CD4-positive, alpha-beta memory T cell (primary cell): ENCODE measurements at regions of chr2 and their contacts with region 1.

Region 1: GRCh38 chr2:55232084-55232862 is at the starts of genes CLHC1 and RPS27A:
- DNase-seq: peak; percentile 92 to 96 (median 94)
- H3K4me3 ChIP-seq: peak within 1 kb of the TSS; percentile 82 to 98
- H3K4me3 Mint-ChIP-seq: peak within 1 kb of the TSS; percentile 92 to 100 (median 100)
- H3K27ac ChIP-seq: peak within 1 kb of the TSS; percentile 97
- H3K27ac Mint-ChIP-seq: peak within 1 kb of the TSS; percentile 94 to 100 (median 98)
- H3K4me1 ChIP-seq: peaks cover 52% of the 10 kb centered on the region
- H3K4me1 Mint-ChIP-seq: peaks cover 46 to 75% (median 62%) of the 10 kb centered on the region in 4 donors
- H3K27me3 ChIP-seq: no peaks in the 10 kb centered on the region
- H3K27me3 Mint-ChIP-seq: no peaks in the 10 kb centered on the region
- total RNA-seq, gene CLHC1: 12.4 to 14.2 TPM
- total RNA-seq, gene RPS27A: 2,280 to 2,392 TPM

Region 2: DNA sequence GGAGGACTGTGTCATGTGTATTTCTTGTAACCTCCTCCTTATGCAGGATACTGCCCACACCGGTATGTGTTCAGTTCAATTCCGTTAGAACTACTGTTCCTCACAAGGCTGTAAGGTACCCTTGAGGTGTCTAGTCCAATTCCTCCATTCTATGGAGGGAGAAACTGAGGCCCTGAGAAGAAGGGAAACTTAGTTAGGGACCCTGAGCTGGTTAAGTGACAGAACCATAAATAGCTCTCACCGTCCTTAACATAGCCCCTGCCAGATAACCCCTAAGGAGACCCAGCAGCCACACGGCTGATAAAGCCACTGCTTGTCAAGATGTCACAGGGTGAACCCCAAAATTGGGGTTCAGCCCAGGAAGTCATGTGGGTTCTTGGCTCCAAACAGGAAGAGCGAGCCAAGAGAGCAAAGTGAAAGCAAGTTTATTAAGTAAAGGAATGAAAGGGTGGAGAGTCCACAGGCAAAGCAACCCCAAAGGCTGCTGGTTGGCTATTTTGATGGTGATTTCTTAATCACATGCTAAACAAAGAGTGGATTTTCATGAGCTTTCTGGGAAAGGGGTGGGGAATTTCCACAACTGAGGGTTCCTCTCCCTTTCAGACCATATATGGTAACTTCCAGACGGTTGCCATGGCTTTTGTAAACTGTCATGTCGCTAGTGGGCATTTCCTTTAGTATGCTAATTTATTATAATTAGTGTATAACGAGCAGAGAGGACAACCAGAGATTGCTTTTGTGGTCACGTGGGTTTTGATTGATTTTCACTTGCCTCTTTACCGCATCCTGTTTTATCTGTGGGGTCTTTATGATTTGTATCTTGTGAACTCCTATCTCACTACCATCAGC is 98.6 kb before region 1 on chr2:
- CTCF ChIA-PET with region 1: interaction called, 3 read pairs
- POLR2A ChIA-PET with region 1: interaction called, 5 read pairs
- intact Hi-C with region 1: loop called (anchors 2 kb)
- DNase-seq: peak; percentile 68 to 89 (median 76)
- H3K4me3 ChIP-seq: peak overlapping the region; percentile 39 to 58
- H3K4me3 Mint-ChIP-seq: peak overlapping the region; percentile 86 to 93 (median 88)
- H3K27ac ChIP-seq: peak overlapping the region; percentile 85
- H3K27ac Mint-ChIP-seq: peak overlapping the region; percentile 94 to 99 (median 98)
- H3K4me1 ChIP-seq: peaks cover 29% of the 10 kb centered on the region
- H3K4me1 Mint-ChIP-seq: peaks cover 18 to 39% (median 26%) of the 10 kb centered on the region in 4 donors
- H3K27me3 ChIP-seq: no peaks in the 10 kb centered on the region
- H3K27me3 Mint-ChIP-seq: no peaks in the 10 kb centered on the region

Region 3: GRCh38 chr2:55268907-55269644 is 36.8 kb after region 1 on chr2 and contains the start of gene MTIF2:
- CTCF ChIA-PET with region 1: no interaction called
- POLR2A ChIA-PET with region 1: interaction called, 20 read pairs
- intact Hi-C with region 1: loop called (anchors 1 kb)
- DNase-seq: peak; percentile 79 to 87 (median 80)
- H3K4me3 ChIP-seq: peak within 1 kb of the TSS; percentile 71 to 74
- H3K4me3 Mint-ChIP-seq: peak within 1 kb of the TSS; percentile 86 to 98 (median 96)
- H3K27ac ChIP-seq: peak within 1 kb of the TSS; percentile 67
- H3K27ac Mint-ChIP-seq: peak within 1 kb of the TSS; percentile 86 to 98 (median 97)
- H3K4me1 ChIP-seq: peaks cover 21% of the 10 kb centered on the region
- H3K4me1 Mint-ChIP-seq: peaks cover 11 to 37% (median 20%) of the 10 kb centered on the region in 4 donors
- H3K27me3 ChIP-seq: no peaks in the 10 kb centered on the region
- H3K27me3 Mint-ChIP-seq: no peaks in the 10 kb centered on the region
- total RNA-seq, gene MTIF2: 33.1 to 38.6 TPM

Region 4: DNA sequence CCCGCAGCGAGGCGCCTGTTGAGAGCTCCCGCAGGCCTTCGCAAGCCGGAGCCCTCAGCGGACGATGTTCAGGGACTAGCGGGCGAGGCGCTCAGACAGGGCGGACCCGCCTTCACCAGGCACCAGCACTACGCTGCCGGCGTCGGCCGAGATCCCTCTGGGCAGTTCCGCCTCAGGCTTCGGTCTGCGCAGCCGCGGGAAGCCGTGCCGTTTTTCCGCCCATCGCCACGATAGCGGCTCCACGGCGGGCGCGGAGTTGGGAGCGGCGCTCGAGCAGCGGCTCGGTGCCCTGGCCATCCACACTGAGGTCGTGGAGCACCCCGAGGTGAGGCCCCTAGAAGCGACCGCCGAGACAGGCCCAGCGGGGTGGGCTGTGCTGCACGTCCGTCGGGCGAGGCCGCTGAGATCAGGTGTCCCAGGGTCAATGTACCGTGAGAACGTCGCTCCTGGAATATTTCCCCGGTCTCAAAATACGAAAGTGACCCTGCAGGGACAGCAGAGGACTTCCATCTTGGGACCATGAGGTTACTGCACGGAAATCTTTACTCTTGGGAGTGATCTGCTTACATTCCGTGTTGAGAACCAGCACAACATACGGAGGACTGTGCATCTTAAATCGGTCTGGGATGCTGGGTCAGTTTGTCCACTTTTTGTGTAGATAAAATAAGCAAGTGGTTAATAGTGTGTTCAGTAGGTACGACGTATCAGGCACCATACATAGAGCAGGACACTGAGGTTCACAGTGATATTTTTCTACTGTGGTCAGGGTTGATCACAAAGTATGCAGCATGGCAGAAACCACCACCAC is 50.0 kb after region 1 on chr2:
- CTCF ChIA-PET with region 1: no interaction called
- POLR2A ChIA-PET with region 1: interaction called, 13 read pairs
- intact Hi-C with region 1: loop called (anchors 5 kb)
- DNase-seq: peak; percentile 86 to 87 (median 86)
- H3K4me3 ChIP-seq: peak overlapping the region; percentile 26 to 90
- H3K4me3 Mint-ChIP-seq: peak overlapping the region; percentile 92 to 96 (median 94)
- H3K27ac ChIP-seq: peak overlapping the region; percentile 62
- H3K27ac Mint-ChIP-seq: peak overlapping the region; percentile 93 to 99 (median 98)
- H3K4me1 ChIP-seq: peaks cover 18% of the 10 kb centered on the region
- H3K4me1 Mint-ChIP-seq: peaks cover 13 to 38% (median 26%) of the 10 kb centered on the region in 4 donors
- H3K27me3 ChIP-seq: no peaks in the 10 kb centered on the region
- H3K27me3 Mint-ChIP-seq: no peaks in the 10 kb centered on the region